Posterior cingulate gyrus (tissue), 11 donors: ENCODE measurements at regions of chr2 and their contacts with region 1.

Region 1: DNA sequence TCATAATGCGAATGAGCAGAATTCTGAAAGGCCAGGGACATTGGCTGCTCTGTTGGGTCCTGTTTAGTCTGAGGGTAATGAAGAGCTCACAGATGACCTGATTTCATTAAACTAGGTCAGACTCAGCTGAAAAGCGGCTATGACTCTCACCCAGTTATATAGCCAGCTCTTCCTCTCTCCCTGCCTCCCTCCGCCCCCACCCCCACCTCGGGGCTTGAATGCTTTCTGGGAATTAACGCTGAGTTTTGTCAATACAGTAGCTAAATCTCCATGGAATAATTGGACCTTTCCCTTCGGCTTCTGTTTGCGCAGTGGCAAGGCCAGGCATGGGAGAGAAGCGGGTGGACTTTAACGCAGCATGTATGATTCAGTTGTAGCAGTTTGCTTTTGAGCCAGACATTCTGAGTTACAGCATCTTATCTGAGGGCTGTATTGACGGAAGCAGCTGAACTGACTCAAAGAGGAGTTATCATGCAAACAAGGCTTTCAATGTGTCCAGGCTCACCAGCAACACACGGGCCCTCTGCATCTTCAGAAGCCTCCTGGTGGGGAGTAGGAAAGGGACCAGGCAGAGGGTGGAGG is 110.6 kb downstream of the MYCN start:
- DNase-seq: no peak

Region 2: DNA sequence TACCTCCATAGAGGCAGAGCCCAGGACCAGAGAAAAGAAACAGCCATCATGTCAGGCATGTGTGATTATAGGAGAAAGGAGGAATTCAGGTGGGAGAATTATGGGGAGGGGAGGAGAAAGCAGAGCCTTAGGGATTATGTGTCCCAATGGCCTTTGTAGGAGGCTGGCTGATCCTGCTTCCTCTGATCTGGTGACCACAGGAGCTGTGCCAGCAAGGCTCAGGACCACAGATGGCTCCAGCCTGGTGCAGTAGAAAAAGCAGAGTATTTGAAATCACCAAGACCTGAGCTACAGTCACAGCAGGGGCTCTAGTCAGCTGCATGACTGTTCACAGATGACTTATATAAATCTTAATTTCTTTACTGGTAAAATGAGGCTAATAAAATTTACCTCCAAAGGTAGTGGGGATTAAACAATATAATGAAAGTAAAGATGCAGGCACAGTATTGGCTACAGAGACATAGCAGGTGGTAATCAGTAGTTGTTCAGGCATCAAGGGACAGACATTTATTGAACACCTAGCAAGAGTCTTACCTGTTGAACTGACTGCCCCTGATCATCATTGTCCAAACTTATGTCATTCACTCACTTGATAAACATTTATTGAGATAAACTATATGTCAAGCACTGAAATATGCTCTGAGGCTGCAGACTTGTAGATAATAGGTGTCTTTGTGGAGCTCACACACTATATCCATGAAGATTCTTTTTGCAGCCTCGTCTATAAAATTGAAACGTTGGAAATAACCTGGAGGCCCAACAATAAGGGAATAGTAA is 10.6 kb after region 1 on chr2:
- intact Hi-C with region 1: loop called (anchors 1 kb)
- DNase-seq: no peak